ENCODE measurements at regions of chr4 and their contacts with region 1.

Region 1: GRCh38 chr4:141158219-141158618 is 24.9 kb upstream of the RNF150 start:
- DNase-seq: no peak
- ATAC-seq: peak in 1 of 8 donors; percentile 49
- H3K4me3 ChIP-seq: no peak overlapping the region
- H3K27ac ChIP-seq: no peak overlapping the region
- H3K4me1 ChIP-seq: peaks cover 0 to 13% (median 5%) of the 10 kb centered on the region in 9 donors
- H3K27me3 ChIP-seq: peaks cover 0 to 3% (median 0%) of the 10 kb centered on the region in 7 donors
- CTCF ChIP-seq: peak in 8 of 9 donors; percentile 44 to 69 (median 56)

Region 2: GRCh38 chr4:140996766-140997165 is 161.5 kb before region 1 on chr4:
- intact Hi-C with region 1: no loop called
- DNase-seq: no peak
- ATAC-seq: no peak
- H3K4me3 ChIP-seq: no peak overlapping the region
- H3K27ac ChIP-seq: peak overlapping the region in 3 of 10 donors; percentile 13 to 65 (median 31)
- H3K4me1 ChIP-seq: peaks cover 2 to 62% (median 16%) of the 10 kb centered on the region in 9 donors
- H3K27me3 ChIP-seq: no peaks in the 10 kb centered on the region
- CTCF ChIP-seq: peak in 1 of 9 donors; percentile 36

Region 3: GRCh38 chr4:141215030-141215429 is 56.8 kb after region 1 on chr4:
- intact Hi-C with region 1: loop called in 1 of 10 experiments (anchors 5 kb)
- DNase-seq: no peak
- ATAC-seq: no peak
- H3K4me3 ChIP-seq: no peak overlapping the region
- H3K27ac ChIP-seq: peak overlapping the region in 3 of 10 donors; percentile 10 to 25 (median 21)
- H3K4me1 ChIP-seq: peaks cover 0 to 29% (median 8%) of the 10 kb centered on the region in 9 donors
- H3K27me3 ChIP-seq: no peaks in the 10 kb centered on the region
- CTCF ChIP-seq: no peak